Activated CD4-positive, alpha-beta memory T cell treated with anti-CD3 and anti-CD28 coated beads, Interleukin-2, amount 10 ng/mL, durations not matched to agents 7 days and 5 days (primary cell): ENCODE measurements at regions of chr10 and their contacts with region 1.

Region 1: DNA sequence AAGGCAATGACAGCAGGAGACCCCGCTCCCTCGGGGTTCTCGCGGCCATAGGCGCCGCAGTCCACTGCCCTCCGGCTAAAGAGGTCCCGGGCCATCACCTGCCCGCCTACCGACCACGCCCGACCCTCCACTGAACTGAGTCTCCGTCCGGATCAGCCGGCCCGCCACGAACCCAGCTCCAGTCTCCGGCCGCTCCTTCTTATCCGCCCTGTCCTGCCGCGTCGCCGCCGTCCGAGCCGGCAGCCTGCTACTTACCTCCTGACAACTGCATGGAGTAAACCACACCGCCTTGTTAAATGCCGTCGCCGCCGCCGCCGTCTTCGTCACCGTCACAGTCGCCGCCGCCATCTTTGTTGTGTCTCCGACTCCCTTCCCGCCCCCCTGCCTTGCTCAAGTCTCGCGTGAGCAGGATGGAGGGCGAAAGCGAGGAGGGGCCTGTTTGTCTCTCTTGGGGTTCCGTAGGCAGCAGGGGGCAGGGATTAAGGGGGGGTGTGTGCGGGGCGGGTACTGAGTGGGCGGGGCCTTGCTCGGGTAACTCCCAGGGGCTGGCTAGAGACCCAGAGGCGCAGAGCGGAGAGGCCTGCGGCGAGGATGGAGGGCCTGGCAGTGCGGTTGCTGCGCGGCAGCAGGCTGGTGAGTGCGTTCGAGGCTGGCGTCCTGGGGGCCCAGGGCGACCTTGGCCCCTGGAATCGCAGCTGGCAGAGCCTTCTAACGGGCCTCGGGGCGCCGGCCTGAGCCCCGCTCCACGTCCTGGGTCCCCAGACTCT is at the starts of genes ACADSB and IKZF5:
- DNase-seq: peak; percentile 97
- H3K4me3 Mint-ChIP-seq: peak within 1 kb of the TSS; percentile 93
- H3K27ac Mint-ChIP-seq: peak within 1 kb of the TSS; percentile 91
- H3K4me1 Mint-ChIP-seq: peaks cover 41% of the 10 kb centered on the region
- H3K27me3 Mint-ChIP-seq: no peaks in the 10 kb centered on the region
- total RNA-seq, gene ACADSB: 21.2 to 21.7 TPM
- total RNA-seq, gene IKZF5: 16.6 to 18.5 TPM

Region 2: GRCh38 chr10:122953827-122954730 is 54.5 kb before region 1 on chr10 and contains the start of gene C10orf88:
- CTCF ChIA-PET with region 1: no interaction called
- POLR2A ChIA-PET with region 1: interaction called, 25 read pairs
- DNase-seq: peak; percentile 98
- H3K4me3 Mint-ChIP-seq: peak within 1 kb of the TSS; percentile 86
- H3K27ac Mint-ChIP-seq: peak within 1 kb of the TSS; percentile 82
- H3K4me1 Mint-ChIP-seq: peaks cover 40% of the 10 kb centered on the region
- H3K27me3 Mint-ChIP-seq: peaks cover 17% of the 10 kb centered on the region
- total RNA-seq, gene C10orf88: 12.6 to 15.1 TPM

Region 3: DNA sequence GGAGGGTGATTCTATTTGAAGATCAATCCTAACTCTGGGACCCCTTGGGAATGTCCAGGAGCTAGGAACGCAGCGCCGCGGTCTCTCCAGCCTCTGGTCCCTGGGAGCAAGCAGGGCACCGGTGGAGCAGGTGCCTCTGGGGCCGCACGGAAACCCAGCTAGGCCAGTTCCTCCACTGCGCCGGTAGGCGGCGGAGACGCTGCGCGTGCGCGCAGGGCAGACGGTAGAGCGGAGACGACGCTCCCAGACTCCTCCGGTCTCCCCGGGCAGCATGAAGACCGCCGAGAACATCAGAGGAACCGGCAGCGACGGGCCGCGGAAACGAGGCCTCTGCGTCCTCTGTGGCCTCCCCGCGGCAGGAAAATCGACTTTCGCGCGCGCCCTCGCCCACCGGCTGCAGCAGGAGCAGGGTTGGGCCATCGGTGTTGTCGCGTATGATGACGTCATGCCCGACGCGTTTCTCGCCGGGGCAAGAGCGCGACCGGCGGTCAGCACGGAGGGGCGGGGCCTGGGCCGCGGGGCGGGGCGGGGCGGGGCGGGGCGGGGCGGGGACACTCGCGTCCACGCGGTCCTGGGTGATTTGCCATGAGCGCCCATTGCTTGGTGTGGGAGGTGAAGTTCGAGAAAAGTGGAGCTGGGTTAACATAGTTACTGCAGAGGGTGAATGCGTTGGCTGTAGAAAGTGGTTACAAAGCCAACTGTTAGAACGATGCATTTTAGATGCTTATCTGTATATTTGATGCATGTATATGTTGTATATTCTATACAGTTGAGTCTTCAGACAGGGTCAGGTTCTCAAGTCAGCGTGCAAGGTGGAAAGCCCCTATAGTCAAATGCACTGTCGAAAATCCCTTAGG is 28.2 kb before region 1 on chr10 and contains the start of gene PSTK:
- CTCF ChIA-PET with region 1: interaction called, 29 read pairs
- POLR2A ChIA-PET with region 1: interaction called, 49 read pairs
- DNase-seq: peak; percentile 89
- H3K4me3 Mint-ChIP-seq: peak within 1 kb of the TSS; percentile 80
- H3K27ac Mint-ChIP-seq: peak within 1 kb of the TSS; percentile 84
- H3K4me1 Mint-ChIP-seq: peaks cover 15% of the 10 kb centered on the region
- H3K27me3 Mint-ChIP-seq: no peaks in the 10 kb centered on the region
- total RNA-seq, gene PSTK: 2.6 to 3.8 TPM

Region 4: GRCh38 chr10:123021517-123021916 is 12.9 kb after region 1 on chr10:
- CTCF ChIA-PET with region 1: interaction called, 16 read pairs
- POLR2A ChIA-PET with region 1: interaction called, 11 read pairs
- DNase-seq: no peak
- H3K4me3 Mint-ChIP-seq: no peak overlapping the region
- H3K27ac Mint-ChIP-seq: no peak overlapping the region
- H3K4me1 Mint-ChIP-seq: peaks cover 13% of the 10 kb centered on the region
- H3K27me3 Mint-ChIP-seq: no peaks in the 10 kb centered on the region

Region 5: DNA sequence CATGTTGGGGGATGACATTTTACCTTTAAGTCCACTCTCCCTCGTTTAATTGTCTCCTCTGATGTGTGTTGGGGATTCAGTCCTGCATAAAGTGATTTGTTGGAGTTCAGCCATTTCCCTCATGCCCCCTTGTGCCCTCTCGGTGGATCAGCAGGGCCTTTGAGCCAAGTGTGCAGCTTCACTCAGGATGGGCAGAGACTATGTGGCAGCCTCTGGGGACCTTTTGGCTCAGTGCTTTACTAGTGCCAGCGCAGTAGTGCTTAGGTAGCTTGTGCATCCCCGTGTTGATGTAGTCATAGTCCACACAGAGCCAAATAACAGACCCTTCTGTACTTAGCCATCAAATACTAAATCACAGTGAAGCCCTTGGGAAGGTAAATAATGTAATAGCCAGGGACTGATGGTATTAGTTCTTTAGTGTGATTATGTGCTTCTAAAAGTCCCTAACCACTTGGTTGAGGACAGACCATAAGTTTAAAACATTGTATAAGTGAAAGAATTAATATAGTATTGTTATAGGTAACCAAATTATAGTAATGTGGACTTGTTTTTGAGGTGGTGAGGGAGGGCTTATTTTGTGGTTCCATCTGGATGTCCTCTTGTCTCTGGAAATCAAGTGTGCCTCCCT is 156.9 kb after region 1 on chr10:
- CTCF ChIA-PET with region 1: no interaction called
- POLR2A ChIA-PET with region 1: no interaction called
- DNase-seq: no peak
- H3K4me3 Mint-ChIP-seq: no peak overlapping the region
- H3K27ac Mint-ChIP-seq: no peak overlapping the region
- H3K4me1 Mint-ChIP-seq: peaks cover 37% of the 10 kb centered on the region
- H3K27me3 Mint-ChIP-seq: no peaks in the 10 kb centered on the region